Pancreas (tissue), 10 donors: ENCODE measurements at regions of chr16 and their contacts with region 1.

Region 1: DNA sequence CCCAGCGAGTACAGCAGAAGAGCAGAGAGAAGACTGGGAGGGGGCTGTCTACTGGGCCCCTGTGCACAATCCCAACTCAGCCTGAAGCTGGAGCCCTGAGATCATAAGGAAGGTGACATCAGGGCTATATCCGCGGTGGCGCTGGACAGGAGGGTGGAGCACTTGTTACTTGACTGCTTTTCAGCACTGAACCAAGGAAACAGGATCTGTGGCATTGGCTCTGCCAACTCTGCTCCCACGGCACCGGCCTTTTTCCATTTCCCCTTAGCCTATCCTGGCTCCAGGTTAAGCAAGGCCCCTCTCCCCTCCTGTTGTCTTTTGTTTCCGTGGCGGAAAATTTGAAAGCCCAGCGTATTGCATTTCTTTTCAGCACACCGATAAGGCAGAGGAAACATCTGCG is 125.0 kb upstream of the IRX3 start:
- DNase-seq: no peak
- ATAC-seq: peak in 1 of 4 donors; percentile 21
- H3K4me3 ChIP-seq: no peak overlapping the region
- H3K27ac ChIP-seq: no peak overlapping the region
- H3K4me1 ChIP-seq: no peaks in the 10 kb centered on the region
- H3K27me3 ChIP-seq: no peaks in the 10 kb centered on the region
- CTCF ChIP-seq: no peak

Region 2: GRCh38 chr16:54355251-54355650 is 56.3 kb before region 1 on chr16:
- intact Hi-C with region 1: loop called in 1 of 3 experiments (anchors 10 kb)
- DNase-seq: no peak
- ATAC-seq: no peak
- H3K4me3 ChIP-seq: no peak overlapping the region
- H3K27ac ChIP-seq: no peak overlapping the region
- H3K4me1 ChIP-seq: no peaks in the 10 kb centered on the region
- H3K27me3 ChIP-seq: no peaks in the 10 kb centered on the region
- CTCF ChIP-seq: no peak